Activated CD4-positive, alpha-beta memory T cell treated with anti-CD3 and anti-CD28 coated beads for 36 hours (primary cell): ENCODE measurements at regions of chr1 and their contacts with region 1.

Region 1: GRCh38 chr1:206816390-206817287 is 44.3 kb upstream of the IL10 start:
- DNase-seq: peak; percentile 43
- H3K4me3 Mint-ChIP-seq: peak overlapping the region; percentile 20
- H3K27ac Mint-ChIP-seq: peak overlapping the region; percentile 77
- H3K4me1 Mint-ChIP-seq: peaks cover 26% of the 10 kb centered on the region
- H3K27me3 Mint-ChIP-seq: no peaks in the 10 kb centered on the region

Region 2: GRCh38 chr1:206761159-206761768 is 55.4 kb before region 1 on chr1:
- CTCF ChIA-PET with region 1: interaction called, 3 read pairs
- POLR2A ChIA-PET with region 1: no interaction called
- intact Hi-C with region 1: loop called (anchors 2 kb)
- DNase-seq: no peak
- H3K4me3 Mint-ChIP-seq: no peak overlapping the region
- H3K27ac Mint-ChIP-seq: no peak overlapping the region
- H3K4me1 Mint-ChIP-seq: peaks cover 30% of the 10 kb centered on the region
- H3K27me3 Mint-ChIP-seq: peaks cover 5% of the 10 kb centered on the region

Region 3: DNA sequence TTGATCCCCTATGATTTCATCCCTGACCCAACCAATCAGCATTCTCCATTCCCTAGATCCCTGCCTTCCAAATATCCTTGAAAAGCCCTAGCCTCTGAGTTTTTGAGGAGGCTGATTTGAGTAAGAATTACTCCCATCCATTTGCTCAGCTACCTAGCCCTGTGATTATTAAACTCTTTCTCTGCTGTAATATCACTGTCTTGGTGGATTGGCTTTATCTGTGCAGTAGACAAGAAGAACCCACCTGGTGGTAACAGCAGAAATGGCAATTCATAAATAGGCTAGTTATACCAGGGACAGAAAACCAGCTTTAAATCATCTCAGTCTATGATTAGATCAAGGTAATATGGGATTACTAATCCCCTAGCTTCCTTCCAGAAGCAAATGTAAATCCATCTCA is 61.8 kb after region 1 on chr1:
- CTCF ChIA-PET with region 1: no interaction called
- POLR2A ChIA-PET with region 1: no interaction called
- intact Hi-C with region 1: no loop called
- DNase-seq: no peak
- H3K4me3 Mint-ChIP-seq: no peak overlapping the region
- H3K27ac Mint-ChIP-seq: no peak overlapping the region
- H3K4me1 Mint-ChIP-seq: peaks cover 17% of the 10 kb centered on the region
- H3K27me3 Mint-ChIP-seq: peaks cover 5% of the 10 kb centered on the region